ENCODE measurements at regions of chr6 and their contacts with region 1.

Region 1: GRCh38 chr6:100176311-100176950 is 182.4 kb upstream of the MCHR2 start:
- DNase-seq: peak; percentile 62
- H3K4me3 Mint-ChIP-seq: peak overlapping the region; percentile 23
- H3K27ac Mint-ChIP-seq: peak overlapping the region; percentile 88
- H3K4me1 Mint-ChIP-seq: peaks cover 28% of the 10 kb centered on the region
- H3K27me3 Mint-ChIP-seq: no peaks in the 10 kb centered on the region
- CTCF ChIP-seq: peak; percentile 27

Region 2: DNA sequence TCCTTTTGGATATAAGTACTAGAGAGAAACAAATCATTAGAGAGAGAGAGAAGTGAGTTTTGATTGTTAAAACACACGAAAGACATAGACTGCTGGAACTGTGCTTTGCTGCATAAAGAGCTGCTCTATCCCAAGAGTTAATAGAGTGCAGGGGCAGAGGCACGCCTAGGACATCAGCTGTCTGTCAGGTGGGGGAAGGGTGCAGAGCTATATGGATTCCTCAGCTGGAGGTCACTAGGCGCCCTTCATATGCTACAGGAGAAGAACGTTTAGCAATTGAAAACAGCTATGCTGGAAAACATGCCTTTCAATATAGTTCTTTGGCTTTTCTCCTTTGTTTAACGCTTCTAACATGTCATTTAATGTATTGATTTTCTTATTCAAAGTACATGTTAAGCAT is 13.4 kb before region 1 on chr6:
- CTCF ChIA-PET with region 1: interaction called, 11 read pairs
- POLR2A ChIA-PET with region 1: interaction called, 3 read pairs
- intact Hi-C with region 1: no loop called
- DNase-seq: no peak
- H3K4me3 Mint-ChIP-seq: no peak overlapping the region
- H3K27ac Mint-ChIP-seq: no peak overlapping the region
- H3K4me1 Mint-ChIP-seq: no peaks in the 10 kb centered on the region
- H3K27me3 Mint-ChIP-seq: no peaks in the 10 kb centered on the region
- CTCF ChIP-seq: no peak

Region 3: DNA sequence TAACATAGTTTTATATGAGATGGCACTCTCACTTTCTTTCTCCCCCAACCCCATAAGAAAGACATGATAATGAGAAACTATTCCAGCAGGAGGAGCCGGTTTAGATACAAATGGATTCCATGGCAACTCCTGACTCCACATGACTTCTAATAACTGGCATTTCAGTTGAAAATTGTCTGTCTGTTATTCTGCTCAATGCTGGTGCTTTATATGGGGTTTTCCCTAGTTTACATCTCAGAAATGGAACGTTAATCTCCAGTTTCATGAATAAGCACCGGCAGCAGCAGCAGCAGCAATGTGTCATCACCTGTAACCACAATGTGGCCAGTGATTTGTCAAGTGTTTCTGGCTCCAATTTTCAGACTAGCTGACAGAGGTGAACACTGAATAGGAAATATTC is 296.2 kb after region 1 on chr6:
- CTCF ChIA-PET with region 1: interaction called, 10 read pairs
- POLR2A ChIA-PET with region 1: no interaction called
- intact Hi-C with region 1: no loop called
- DNase-seq: peak; percentile 65
- H3K4me3 Mint-ChIP-seq: no peak overlapping the region
- H3K27ac Mint-ChIP-seq: no peak overlapping the region
- H3K4me1 Mint-ChIP-seq: peaks cover 7% of the 10 kb centered on the region
- H3K27me3 Mint-ChIP-seq: no peaks in the 10 kb centered on the region
- CTCF ChIP-seq: no peak